GM10248 (cell line): ENCODE measurements at regions of chr4 and their contacts with region 1.

Region 1: GRCh38 chr4:145404761-145405160 is 76.9 kb upstream of the SMAD1 start:
- DNase-seq: no peak
- CTCF ChIP-seq: no peak

Region 2: GRCh38 chr4:145390571-145390970 is 14.2 kb before region 1 on chr4:
- CTCF ChIA-PET with region 1: interaction called, 10 read pairs
- POLR2A ChIA-PET with region 1: no interaction called
- DNase-seq: no peak
- CTCF ChIP-seq: no peak